A549 (cell line): ENCODE measurements at regions of chr7 and their contacts with region 1.

Region 1: GRCh38 chr7:149742075-149742701 is 31.2 kb downstream of the ZNF467 start:
- DNase-seq: peak; percentile 62 to 93
- ATAC-seq: peak; percentile 90 to 96
- H3K4me3 ChIP-seq: peak overlapping the region; percentile 44
- H3K27ac ChIP-seq: peak overlapping the region; percentile 53 to 69; a peak in 5 of 6 replicates
- H3K4me1 ChIP-seq: no peaks in the 10 kb centered on the region
- CTCF ChIP-seq: peak; percentile 91
- EP300 ChIP-seq: no peak
- POLR2A ChIP-seq: no peak
- RAD21 ChIP-seq: peak; percentile 81 to 86

Region 2: GRCh38 chr7:149662591-149663095 is 79.5 kb before region 1 on chr7:
- CTCF ChIA-PET with region 1: interaction called, 91 read pairs
- POLR2A ChIA-PET with region 1: interaction called, 7 read pairs
- DNase-seq: peak; percentile 33 to 83
- ATAC-seq: peak; percentile 96 to 99
- H3K4me3 ChIP-seq: no peak overlapping the region
- H3K27ac ChIP-seq: no peak overlapping the region
- H3K4me1 ChIP-seq: 0 out of 3 replicates have a peak, but pooled peaks cover 2% of the 10 kb centered on the region
- CTCF ChIP-seq: peak; percentile 53
- EP300 ChIP-seq: no peak
- POLR2A ChIP-seq: no peak
- RAD21 ChIP-seq: peak; percentile 64 to 79

Region 3: GRCh38 chr7:149680331-149681025 is 61.7 kb before region 1 on chr7:
- CTCF ChIA-PET with region 1: interaction called, 13 read pairs
- POLR2A ChIA-PET with region 1: no interaction called
- DNase-seq: no peak
- ATAC-seq: no peak
- H3K4me3 ChIP-seq: no peak overlapping the region
- H3K27ac ChIP-seq: no peak overlapping the region
- H3K4me1 ChIP-seq: no peaks in the 10 kb centered on the region
- CTCF ChIP-seq: no peak
- EP300 ChIP-seq: no peak
- POLR2A ChIP-seq: no peak
- RAD21 ChIP-seq: no peak

Region 4: GRCh38 chr7:149720372-149721248 is 21.6 kb before region 1 on chr7:
- CTCF ChIA-PET with region 1: interaction called, 10 read pairs
- POLR2A ChIA-PET with region 1: no interaction called
- DNase-seq: no peak
- ATAC-seq: peak; percentile 30 to 71; a peak in 4 of 6 replicates
- H3K4me3 ChIP-seq: no peak overlapping the region
- H3K27ac ChIP-seq: peak overlapping the region in 1 of 2 experiments; percentile 55; a peak in 2 of 6 replicates
- H3K4me1 ChIP-seq: peaks cover 24% of the 10 kb centered on the region
- CTCF ChIP-seq: no peak
- EP300 ChIP-seq: no peak
- POLR2A ChIP-seq: no peak
- RAD21 ChIP-seq: no peak

Region 5: DNA sequence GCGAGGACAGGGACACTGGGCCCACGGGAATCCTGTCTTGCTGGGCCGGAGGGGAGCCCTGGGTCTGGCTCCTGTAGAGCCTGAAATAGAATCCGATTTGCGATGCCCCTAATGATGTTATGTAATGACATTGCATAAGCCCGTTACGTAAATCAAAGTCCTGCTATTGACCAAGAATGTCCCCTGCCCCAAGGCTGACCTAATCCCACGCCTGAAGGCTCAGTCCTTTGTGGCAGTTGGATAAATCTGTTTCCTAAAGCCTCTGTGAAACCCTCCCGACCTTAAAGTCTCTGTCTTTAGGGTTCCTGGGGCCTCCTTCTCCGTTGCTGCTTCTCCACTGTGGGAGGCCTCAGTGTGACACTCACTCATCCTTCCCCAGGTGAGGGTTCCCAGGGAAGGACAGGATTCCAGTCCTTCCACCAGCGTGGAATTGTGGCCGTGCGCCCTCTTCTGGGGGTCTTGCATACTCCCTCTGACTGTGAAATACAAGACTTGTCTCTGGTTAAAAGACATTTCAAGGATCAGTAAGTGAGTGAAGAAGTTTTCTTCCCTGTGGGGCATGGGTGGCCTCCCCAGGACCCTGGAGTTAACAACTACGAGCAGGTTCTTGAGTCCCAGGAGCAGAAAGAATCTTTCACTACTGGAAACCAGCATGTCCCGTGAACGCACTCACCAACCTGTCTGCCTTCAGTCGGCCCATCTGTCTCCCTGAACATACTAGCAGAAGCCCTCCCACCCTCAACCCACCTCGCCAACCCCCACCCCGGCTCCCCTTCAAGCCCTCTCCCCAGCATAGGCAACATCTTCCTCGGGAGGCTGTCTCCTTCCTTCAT is 11.4 kb after region 1 on chr7:
- CTCF ChIA-PET with region 1: interaction called, 41 read pairs
- POLR2A ChIA-PET with region 1: no interaction called
- DNase-seq: peak; percentile 65 to 73
- ATAC-seq: peak; percentile 87 to 95
- H3K4me3 ChIP-seq: no peak overlapping the region
- H3K27ac ChIP-seq: no peak overlapping the region
- H3K4me1 ChIP-seq: 0 out of 3 replicates have a peak, but pooled peaks cover under 1% of the 10 kb centered on the region
- CTCF ChIP-seq: peak; percentile 68
- EP300 ChIP-seq: no peak
- POLR2A ChIP-seq: no peak
- RAD21 ChIP-seq: peak; percentile 61 to 79

Region 6: GRCh38 chr7:149765399-149766121 is 23.4 kb after region 1 on chr7:
- CTCF ChIA-PET with region 1: interaction called, 13 read pairs
- POLR2A ChIA-PET with region 1: no interaction called
- DNase-seq: no peak
- ATAC-seq: no peak
- H3K4me3 ChIP-seq: no peak overlapping the region
- H3K27ac ChIP-seq: no peak overlapping the region
- H3K4me1 ChIP-seq: no peaks in the 10 kb centered on the region
- CTCF ChIP-seq: no peak
- EP300 ChIP-seq: no peak
- POLR2A ChIP-seq: no peak
- RAD21 ChIP-seq: no peak